Mammary epithelial cell (primary cell): ENCODE measurements at regions of chr7 and their contacts with region 1.

Region 1: GRCh38 chr7:129952653-129953560 is at the start of gene UBE2H:
- DNase-seq: peak; percentile 92
- H3K4me3 ChIP-seq: peak within 1 kb of the TSS; percentile 69 to 91 (median 76)
- H3K27ac ChIP-seq: peak within 1 kb of the TSS; percentile 96
- H3K4me1 ChIP-seq: peaks cover 30% of the 10 kb centered on the region
- H3K27me3 ChIP-seq: no peaks in the 10 kb centered on the region
- CTCF ChIP-seq: no peak
- total RNA-seq, gene UBE2H: 122 to 126 TPM

Region 2: DNA sequence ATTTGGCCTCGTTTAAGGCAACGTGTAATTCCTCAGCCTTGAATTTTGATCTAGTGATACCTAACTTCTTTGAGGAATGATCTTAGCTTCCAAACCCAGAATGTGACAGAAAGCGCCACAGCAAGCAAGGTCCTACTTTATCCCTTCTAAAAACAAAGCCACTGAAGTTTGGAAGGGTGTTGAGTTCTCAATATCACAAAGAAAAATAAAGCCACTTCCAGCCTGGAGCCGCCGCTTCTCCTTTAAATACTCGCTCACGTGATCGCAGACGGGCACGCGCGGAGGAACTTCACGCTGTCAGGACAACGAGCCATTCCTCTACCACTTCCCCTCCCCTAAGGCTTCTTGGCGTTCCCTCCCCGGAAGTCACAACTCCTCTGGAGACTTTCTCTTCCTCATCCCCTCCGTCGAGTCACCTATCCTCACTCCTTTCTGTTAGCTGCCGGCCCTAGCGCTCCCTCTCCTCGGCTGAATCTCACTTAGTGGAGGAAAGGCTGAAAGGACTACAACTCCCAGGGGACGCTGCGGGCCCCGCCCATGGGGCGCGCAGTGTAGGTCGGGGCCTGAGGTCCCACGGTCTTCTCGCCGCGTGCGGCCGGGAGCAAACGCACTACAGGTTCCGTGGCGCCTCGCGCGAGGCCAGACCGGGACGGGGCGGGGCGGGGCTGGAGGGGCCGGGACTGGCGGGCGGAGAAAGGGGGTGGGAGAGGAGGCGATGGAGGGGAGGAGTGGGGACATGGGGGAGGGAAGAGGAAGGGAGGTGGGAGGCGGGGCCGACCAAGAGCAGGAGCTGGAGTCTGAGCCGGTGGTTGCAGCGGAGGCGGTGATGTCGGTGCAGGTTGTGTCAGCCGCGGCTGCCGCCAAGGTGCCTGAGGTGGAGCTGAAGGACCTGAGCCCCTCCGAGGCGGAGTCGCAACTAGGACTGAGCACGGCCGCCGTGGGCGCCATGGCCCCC is 728.4 kb before region 1 on chr7 and contains the start of gene AHCYL2:
- CTCF ChIA-PET with region 1: no interaction called
- dilution Hi-C with region 1: no loop called
- in situ Hi-C with region 1: no loop called
- intact Hi-C with region 1: loop called (anchors 10 kb)
- DNase-seq: peak; percentile 98
- H3K4me3 ChIP-seq: peak within 1 kb of the TSS; percentile 75 to 82 (median 78)
- H3K27ac ChIP-seq: peak within 1 kb of the TSS; percentile 77
- H3K4me1 ChIP-seq: peaks cover 15% of the 10 kb centered on the region
- H3K27me3 ChIP-seq: no peaks in the 10 kb centered on the region
- CTCF ChIP-seq: no peak
- total RNA-seq, gene AHCYL2: 19.3 to 26.6 TPM

Region 3: GRCh38 chr7:129664029-129665012 is 288.6 kb before region 1 on chr7:
- CTCF ChIA-PET with region 1: no interaction called
- dilution Hi-C with region 1: no loop called
- in situ Hi-C with region 1: no loop called
- intact Hi-C with region 1: loop called (anchors 2 kb)
- DNase-seq: peak; percentile 48
- H3K4me3 ChIP-seq: no peak overlapping the region
- H3K27ac ChIP-seq: peak overlapping the region; percentile 4
- H3K4me1 ChIP-seq: peaks cover 17% of the 10 kb centered on the region
- H3K27me3 ChIP-seq: no peaks in the 10 kb centered on the region
- CTCF ChIP-seq: peak; percentile 65 to 66

Region 4: DNA sequence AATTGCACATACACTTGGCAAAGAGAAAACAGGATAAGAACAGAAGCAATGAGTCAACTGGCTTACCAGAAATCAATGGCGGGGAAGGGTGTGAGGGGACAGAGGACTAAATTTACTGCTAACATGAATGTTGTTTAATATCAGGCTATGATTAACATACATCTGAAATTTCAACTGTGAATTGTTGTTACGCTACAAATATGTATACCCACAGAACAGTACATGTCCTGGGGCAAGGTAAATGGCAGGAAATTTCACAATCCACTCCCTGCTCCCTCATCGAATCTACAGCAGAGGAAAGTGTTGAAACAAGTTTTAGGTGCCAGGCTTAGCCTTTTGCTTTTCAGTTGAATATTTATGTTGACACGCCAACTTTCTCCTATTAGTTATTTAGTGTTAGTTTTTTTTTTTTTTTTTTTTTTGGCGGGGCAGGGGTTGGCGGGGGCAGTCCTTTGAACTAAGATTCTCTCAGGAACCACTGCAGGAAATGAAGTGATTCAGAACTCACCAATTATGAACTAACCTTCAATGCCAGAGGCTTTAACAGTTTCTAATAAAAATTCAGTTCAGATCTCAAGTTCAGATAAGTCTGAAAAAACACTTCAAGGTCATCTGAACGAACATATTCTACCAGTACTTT is 99.1 kb before region 1 on chr7:
- CTCF ChIA-PET with region 1: no interaction called
- dilution Hi-C with region 1: loop called (anchors 5 kb)
- in situ Hi-C with region 1: no loop called
- intact Hi-C with region 1: loop called (anchors 5 kb)
- DNase-seq: peak; percentile 92
- H3K4me3 ChIP-seq: peak overlapping the region in 1 of 3 experiments; percentile 8
- H3K27ac ChIP-seq: peak overlapping the region; percentile 79
- H3K4me1 ChIP-seq: peaks cover 30% of the 10 kb centered on the region
- H3K27me3 ChIP-seq: no peaks in the 10 kb centered on the region
- CTCF ChIP-seq: no peak

Region 5: DNA sequence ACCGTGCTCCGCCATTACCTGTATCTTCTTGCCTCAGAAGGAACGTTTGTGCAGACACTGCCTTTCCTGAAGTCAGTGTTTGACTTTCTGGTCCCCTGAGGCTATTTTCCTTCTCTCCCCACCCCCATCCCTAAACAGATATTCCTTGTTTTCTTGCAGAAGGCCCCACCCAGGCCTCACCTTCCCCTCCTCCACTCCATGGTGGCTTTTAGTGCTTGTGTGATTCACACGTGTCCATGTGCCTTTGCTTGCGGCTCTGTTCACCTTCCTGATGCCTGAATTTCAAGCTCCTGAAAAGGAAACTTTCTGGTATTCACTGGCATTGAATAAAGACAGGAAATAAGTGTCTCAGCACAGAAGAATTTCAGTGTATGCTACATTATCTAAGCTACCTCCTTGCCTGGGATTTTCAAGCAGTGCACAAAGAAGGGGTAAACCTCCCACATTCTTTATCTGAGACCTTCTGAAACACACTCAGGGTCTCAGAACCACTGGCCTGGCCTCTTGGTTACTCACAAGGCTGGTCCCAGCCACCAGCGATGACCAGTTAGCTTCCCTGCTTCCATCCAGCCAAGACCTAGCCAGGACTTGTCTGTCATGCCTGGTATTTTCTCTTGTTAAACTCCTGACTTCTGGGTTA is 17.0 kb after region 1 on chr7:
- CTCF ChIA-PET with region 1: no interaction called
- dilution Hi-C with region 1: no loop called
- in situ Hi-C with region 1: no loop called
- intact Hi-C with region 1: loop called (anchors 1 kb)
- DNase-seq: peak; percentile 98
- H3K4me3 ChIP-seq: peak overlapping the region in 1 of 3 experiments; percentile 14
- H3K27ac ChIP-seq: peak overlapping the region; percentile 96
- H3K4me1 ChIP-seq: peaks cover 21% of the 10 kb centered on the region
- H3K27me3 ChIP-seq: no peaks in the 10 kb centered on the region
- CTCF ChIP-seq: no peak

Region 6: GRCh38 chr7:129989466-129989865 is 36.6 kb after region 1 on chr7:
- CTCF ChIA-PET with region 1: no interaction called
- dilution Hi-C with region 1: no loop called
- in situ Hi-C with region 1: no loop called
- intact Hi-C with region 1: loop called (anchors 1 kb)
- DNase-seq: peak; percentile 24
- H3K4me3 ChIP-seq: no peak overlapping the region
- H3K27ac ChIP-seq: no peak overlapping the region
- H3K4me1 ChIP-seq: no peaks in the 10 kb centered on the region
- H3K27me3 ChIP-seq: no peaks in the 10 kb centered on the region
- CTCF ChIP-seq: no peak

Region 7: GRCh38 chr7:130227883-130228575 is 275.1 kb after region 1 on chr7:
- CTCF ChIA-PET with region 1: no interaction called
- dilution Hi-C with region 1: no loop called
- in situ Hi-C with region 1: no loop called
- intact Hi-C with region 1: no loop called
- DNase-seq: no peak
- H3K4me3 ChIP-seq: no peak overlapping the region
- H3K27ac ChIP-seq: no peak overlapping the region
- H3K4me1 ChIP-seq: no peaks in the 10 kb centered on the region
- H3K27me3 ChIP-seq: no peaks in the 10 kb centered on the region
- CTCF ChIP-seq: no peak